ENCODE measurements at regions of chr1 and their contacts with region 1.

Region 1: DNA sequence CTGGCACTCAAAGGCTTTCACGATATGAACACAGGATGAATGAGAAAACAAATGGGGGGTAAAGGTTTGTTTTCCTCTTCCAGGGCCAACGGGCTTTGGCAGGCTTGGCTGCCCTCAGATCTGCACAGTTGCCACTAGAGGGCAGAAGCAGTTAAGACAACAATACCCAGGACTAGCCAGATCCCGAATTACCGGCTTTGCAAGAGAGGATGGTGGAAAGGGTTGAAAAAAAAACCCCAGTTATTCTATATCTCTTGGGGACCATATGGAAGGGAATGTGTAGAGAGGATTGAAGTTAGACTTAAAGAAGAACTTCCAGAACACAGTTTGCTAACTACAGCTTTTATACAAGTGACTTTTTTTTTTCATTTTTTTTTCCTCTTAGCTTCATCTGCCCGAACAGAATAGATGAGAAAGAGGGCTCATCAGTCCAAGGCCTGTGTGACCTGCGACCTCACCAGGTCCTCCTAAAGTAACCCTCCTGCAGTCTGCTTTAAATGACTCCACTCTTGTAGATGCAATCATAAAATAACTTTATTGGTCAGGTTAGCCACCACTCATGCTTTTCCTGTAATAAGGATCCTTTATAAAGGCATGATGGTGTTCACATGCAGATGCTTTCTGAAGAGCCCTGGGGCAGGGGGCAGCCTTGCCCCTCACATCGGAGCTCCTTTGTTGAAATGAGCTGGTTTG is 10.7 kb downstream of the FMOD start:
- DNase-seq: peak; percentile 64
- H3K4me3 Mint-ChIP-seq: no peak overlapping the region
- H3K27ac Mint-ChIP-seq: no peak overlapping the region
- H3K4me1 Mint-ChIP-seq: peaks cover 25% of the 10 kb centered on the region
- H3K27me3 Mint-ChIP-seq: peaks cover 50% of the 10 kb centered on the region

Region 2: DNA sequence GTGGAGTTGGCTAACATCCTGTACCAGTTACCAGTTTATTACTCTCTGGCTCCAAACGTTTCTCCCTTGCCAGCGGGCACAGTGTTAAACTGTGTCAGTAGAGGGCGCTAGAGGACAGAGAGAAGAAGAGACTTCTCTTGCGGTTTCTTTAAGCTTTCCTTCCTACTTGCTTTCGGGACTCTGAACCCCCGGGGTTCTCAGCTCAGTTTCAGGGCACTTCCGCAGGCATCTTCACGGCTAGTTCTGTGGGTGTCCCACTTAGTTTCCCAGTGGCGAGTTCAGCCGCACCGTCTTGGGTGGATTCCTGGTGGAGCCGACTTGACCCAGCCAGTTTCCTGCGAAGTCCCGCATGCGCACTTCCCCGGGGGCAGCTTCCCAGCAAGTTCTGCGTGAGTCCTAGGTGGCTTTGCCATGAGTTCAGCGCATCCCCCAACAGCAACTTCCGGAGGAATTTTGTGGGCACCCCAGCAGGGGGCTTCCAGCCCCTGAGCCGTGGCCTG is 72.9 kb before region 1 on chr1:
- CTCF ChIA-PET with region 1: interaction called, 512 read pairs
- POLR2A ChIA-PET with region 1: interaction called, 12 read pairs
- DNase-seq: peak; percentile 86
- H3K4me3 Mint-ChIP-seq: peak overlapping the region; percentile 76
- H3K27ac Mint-ChIP-seq: peak overlapping the region; percentile 55
- H3K4me1 Mint-ChIP-seq: peaks cover 22% of the 10 kb centered on the region
- H3K27me3 Mint-ChIP-seq: peaks cover 6% of the 10 kb centered on the region

Region 3: GRCh38 chr1:203290261-203291089 is 49.8 kb before region 1 on chr1:
- CTCF ChIA-PET with region 1: interaction called, 17 read pairs
- POLR2A ChIA-PET with region 1: interaction called, 33 read pairs
- DNase-seq: peak; percentile 98
- H3K4me3 Mint-ChIP-seq: peak overlapping the region; percentile 76
- H3K27ac Mint-ChIP-seq: peak overlapping the region; percentile 100
- H3K4me1 Mint-ChIP-seq: peaks cover 73% of the 10 kb centered on the region
- H3K27me3 Mint-ChIP-seq: no peaks in the 10 kb centered on the region

Region 4: DNA sequence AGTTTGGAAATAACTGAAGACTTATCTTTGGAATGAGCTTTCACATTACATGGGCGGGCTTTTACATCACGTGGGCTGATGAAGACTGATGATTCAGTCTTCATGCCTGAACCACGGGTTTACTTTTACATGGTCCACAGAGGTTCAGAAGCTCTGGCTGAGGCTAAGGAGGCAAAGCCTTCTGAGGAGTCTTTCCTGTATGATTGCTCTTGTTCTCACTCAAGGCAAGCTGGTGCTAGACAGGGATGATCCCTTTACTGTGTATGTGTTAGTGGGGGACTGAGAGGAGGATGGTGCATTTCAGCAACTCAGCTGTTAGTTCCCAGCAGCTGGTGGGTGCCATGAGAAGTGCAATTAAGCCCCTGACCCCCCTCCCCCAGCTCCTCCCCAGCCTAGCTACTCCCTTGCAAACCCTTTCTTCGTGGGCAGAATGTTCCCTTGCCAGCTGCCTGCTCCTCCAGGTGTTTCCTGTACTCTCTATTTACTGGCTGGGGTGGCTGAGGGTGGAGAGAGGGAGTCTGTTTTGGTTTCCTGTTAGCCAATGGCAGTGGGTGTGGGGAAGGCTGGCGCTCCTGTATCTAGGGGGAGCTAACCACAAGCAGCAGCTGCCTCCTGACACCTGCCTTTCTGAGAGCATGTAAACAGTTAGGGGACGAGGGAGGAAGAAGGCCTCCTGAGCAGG is 19.5 kb before region 1 on chr1:
- CTCF ChIA-PET with region 1: interaction called, 76 read pairs
- POLR2A ChIA-PET with region 1: interaction called, 48 read pairs
- DNase-seq: peak; percentile 83
- H3K4me3 Mint-ChIP-seq: peak overlapping the region; percentile 38
- H3K27ac Mint-ChIP-seq: peak overlapping the region; percentile 83
- H3K4me1 Mint-ChIP-seq: peaks cover 70% of the 10 kb centered on the region
- H3K27me3 Mint-ChIP-seq: peaks cover 3% of the 10 kb centered on the region

Region 5: DNA sequence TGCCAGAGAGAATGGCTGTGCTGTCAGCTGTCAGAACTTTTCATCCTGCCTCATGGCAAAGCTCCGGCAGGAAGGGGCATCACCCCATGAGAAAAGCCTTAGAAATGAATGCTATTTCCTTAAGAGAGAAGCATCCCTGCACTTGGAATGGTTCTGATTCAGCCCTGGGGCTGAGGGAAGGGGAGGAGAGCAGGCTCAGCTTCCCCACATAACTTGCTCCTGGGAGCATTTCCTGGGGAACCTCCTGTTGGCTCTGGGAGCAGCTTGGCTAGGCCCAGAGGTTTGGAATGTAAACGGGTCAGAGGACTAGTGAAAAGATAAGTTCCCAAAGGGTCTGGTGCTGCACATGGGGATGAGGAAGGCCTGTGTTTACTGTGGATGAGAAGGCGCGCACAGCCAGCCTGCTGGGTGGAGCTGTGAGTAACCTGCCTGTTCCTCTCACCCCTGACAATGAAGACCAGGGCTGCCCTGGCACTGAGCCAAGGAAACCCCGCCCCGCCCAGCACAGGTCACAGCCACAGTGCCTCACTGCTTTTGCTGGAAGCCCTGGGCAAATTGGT is 140.3 kb after region 1 on chr1:
- CTCF ChIA-PET with region 1: interaction called, 132 read pairs
- POLR2A ChIA-PET with region 1: no interaction called
- DNase-seq: peak; percentile 58
- H3K4me3 Mint-ChIP-seq: no peak overlapping the region
- H3K27ac Mint-ChIP-seq: no peak overlapping the region
- H3K4me1 Mint-ChIP-seq: peaks cover 20% of the 10 kb centered on the region
- H3K27me3 Mint-ChIP-seq: peaks cover 26% of the 10 kb centered on the region